Activated CD4-positive, alpha-beta memory T cell treated with anti-CD3 and anti-CD28 coated beads for 36 hours (primary cell): ENCODE measurements at regions of chr17 and their contacts with region 1.

Region 1: GRCh38 chr17:44533533-44534246 is 23.6 kb upstream of the FZD2 start:
- DNase-seq: peak; percentile 91
- H3K4me3 Mint-ChIP-seq: peak overlapping the region; percentile 6
- H3K27ac Mint-ChIP-seq: no peak overlapping the region
- H3K4me1 Mint-ChIP-seq: peaks cover 8% of the 10 kb centered on the region
- H3K27me3 Mint-ChIP-seq: peaks cover 3% of the 10 kb centered on the region

Region 2: DNA sequence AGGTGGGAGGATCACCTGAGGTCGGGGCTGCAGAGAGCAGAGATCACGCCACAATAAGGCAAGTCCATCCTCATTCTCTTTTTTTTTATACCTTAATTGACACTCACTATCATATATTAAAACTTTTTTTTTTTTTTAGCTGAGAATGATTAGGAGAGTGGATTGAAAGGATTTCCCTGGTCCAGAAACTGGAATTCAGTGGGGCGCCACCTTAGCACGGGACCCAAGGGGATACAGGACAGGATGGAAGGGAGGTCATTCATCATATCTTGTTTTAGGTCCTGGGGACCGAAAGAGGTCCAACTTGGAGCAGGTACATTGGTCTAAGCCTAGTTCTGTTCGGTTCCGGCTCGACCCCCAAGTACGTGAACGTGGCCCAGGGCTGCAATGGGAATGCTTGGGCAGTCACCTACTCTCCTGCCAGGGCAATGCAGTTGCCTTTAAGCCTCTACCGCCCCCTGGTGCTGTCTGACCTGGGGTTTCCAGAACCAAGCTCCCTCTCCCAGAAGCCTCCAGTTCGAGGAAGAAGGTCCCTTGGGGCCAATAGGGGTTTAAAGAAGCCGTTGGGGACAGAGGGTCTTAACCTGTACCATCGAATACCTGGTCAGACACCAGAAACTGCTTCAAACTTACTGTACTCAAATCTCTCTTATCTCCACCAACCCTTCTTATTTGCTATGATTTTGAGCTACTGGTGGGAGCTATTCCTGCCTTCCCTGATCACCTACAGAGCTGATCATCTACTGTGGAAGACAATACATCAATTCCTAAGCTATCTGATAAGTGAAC is 10.6 kb before region 1 on chr17:
- CTCF ChIA-PET with region 1: interaction called, 20 read pairs
- POLR2A ChIA-PET with region 1: no interaction called
- intact Hi-C with region 1: no loop called
- DNase-seq: peak; percentile 82
- H3K4me3 Mint-ChIP-seq: no peak overlapping the region
- H3K27ac Mint-ChIP-seq: no peak overlapping the region
- H3K4me1 Mint-ChIP-seq: no peaks in the 10 kb centered on the region
- H3K27me3 Mint-ChIP-seq: peaks cover 12% of the 10 kb centered on the region

Region 3: GRCh38 chr17:44636562-44636961 is 102.9 kb after region 1 on chr17:
- CTCF ChIA-PET with region 1: interaction called, 9 read pairs
- POLR2A ChIA-PET with region 1: no interaction called
- intact Hi-C with region 1: loop called (anchors 5 kb)
- DNase-seq: no peak
- H3K4me3 Mint-ChIP-seq: no peak overlapping the region
- H3K27ac Mint-ChIP-seq: no peak overlapping the region
- H3K4me1 Mint-ChIP-seq: no peaks in the 10 kb centered on the region
- H3K27me3 Mint-ChIP-seq: peaks cover 8% of the 10 kb centered on the region

Region 4: GRCh38 chr17:44672479-44673093 is 138.9 kb after region 1 on chr17:
- CTCF ChIA-PET with region 1: interaction called, 13 read pairs
- POLR2A ChIA-PET with region 1: no interaction called
- intact Hi-C with region 1: no loop called
- DNase-seq: no peak
- H3K4me3 Mint-ChIP-seq: no peak overlapping the region
- H3K27ac Mint-ChIP-seq: no peak overlapping the region
- H3K4me1 Mint-ChIP-seq: no peaks in the 10 kb centered on the region
- H3K27me3 Mint-ChIP-seq: no peaks in the 10 kb centered on the region

Region 5: DNA sequence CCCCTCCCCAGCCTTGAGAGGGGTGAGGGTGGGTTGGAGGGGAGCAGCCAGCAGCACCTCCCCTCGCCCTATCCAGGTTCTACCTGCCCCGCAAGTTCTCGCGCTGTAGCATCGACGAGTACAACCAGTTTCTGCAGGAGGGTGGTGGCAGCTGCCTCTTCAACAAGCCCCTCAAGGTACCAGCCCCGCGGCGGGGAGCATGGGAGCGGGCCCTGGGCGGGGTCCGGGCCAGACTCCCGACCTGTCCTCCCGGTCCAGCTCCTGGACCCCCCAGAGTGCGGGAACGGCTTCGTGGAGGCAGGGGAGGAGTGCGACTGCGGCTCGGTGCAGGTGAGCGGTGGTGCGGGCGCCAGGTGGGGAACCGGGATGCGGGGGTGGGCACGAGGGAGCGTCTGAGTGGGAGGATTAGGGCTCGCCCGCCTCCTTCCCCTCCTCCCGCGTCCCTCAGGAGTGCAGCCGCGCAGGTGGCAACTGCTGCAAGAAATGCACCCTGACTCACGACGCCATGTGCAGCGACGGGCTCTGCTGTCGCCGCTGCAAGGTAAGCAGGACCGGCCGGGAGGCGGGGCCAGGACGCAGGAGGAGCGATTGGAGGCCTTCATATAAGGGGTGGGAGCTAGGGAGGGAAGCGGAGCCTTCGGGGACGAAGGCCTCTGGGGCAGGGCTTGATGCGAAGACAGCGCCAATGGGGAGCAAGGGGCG is 241.6 kb after region 1 on chr17:
- CTCF ChIA-PET with region 1: interaction called, 3 read pairs
- POLR2A ChIA-PET with region 1: no interaction called
- intact Hi-C with region 1: loop called (anchors 1 kb)
- DNase-seq: no peak
- H3K4me3 Mint-ChIP-seq: peak overlapping the region; percentile 80
- H3K27ac Mint-ChIP-seq: peak overlapping the region; percentile 42
- H3K4me1 Mint-ChIP-seq: peaks cover 5% of the 10 kb centered on the region
- H3K27me3 Mint-ChIP-seq: peaks cover 5% of the 10 kb centered on the region

Region 6: GRCh38 chr17:44864866-44865660 is 331.4 kb after region 1 on chr17:
- CTCF ChIA-PET with region 1: interaction called, 3 read pairs
- POLR2A ChIA-PET with region 1: no interaction called
- intact Hi-C with region 1: loop called (anchors 10 kb)
- DNase-seq: peak; percentile 69
- H3K4me3 Mint-ChIP-seq: no peak overlapping the region
- H3K27ac Mint-ChIP-seq: no peak overlapping the region
- H3K4me1 Mint-ChIP-seq: no peaks in the 10 kb centered on the region
- H3K27me3 Mint-ChIP-seq: no peaks in the 10 kb centered on the region